H1 (cell line): ENCODE measurements at regions of chr4 and their contacts with region 1.

Region 1: GRCh38 chr4:7987148-7987989 is 47.7 kb upstream of the AFAP1 start:
- DNase-seq: peak in 1 of 2 experiments; percentile 95
- H3K4me3 ChIP-seq: no peak overlapping the region
- H3K27ac ChIP-seq: no peak overlapping the region
- H3K4me1 ChIP-seq: peaks cover 0 to 6% (median 2%) of the 10 kb centered on the region in 4 experiments; a peak in 1 of 7 replicates
- H3K27me3 ChIP-seq: no peaks in the 10 kb centered on the region
- CTCF ChIP-seq: peak in 2 of 3 experiments; percentile 93 to 98; a peak in 3 of 4 replicates
- EP300 ChIP-seq: no peak
- POLR2A ChIP-seq: no peak
- RAD21 ChIP-seq: peak; percentile 99

Region 2: DNA sequence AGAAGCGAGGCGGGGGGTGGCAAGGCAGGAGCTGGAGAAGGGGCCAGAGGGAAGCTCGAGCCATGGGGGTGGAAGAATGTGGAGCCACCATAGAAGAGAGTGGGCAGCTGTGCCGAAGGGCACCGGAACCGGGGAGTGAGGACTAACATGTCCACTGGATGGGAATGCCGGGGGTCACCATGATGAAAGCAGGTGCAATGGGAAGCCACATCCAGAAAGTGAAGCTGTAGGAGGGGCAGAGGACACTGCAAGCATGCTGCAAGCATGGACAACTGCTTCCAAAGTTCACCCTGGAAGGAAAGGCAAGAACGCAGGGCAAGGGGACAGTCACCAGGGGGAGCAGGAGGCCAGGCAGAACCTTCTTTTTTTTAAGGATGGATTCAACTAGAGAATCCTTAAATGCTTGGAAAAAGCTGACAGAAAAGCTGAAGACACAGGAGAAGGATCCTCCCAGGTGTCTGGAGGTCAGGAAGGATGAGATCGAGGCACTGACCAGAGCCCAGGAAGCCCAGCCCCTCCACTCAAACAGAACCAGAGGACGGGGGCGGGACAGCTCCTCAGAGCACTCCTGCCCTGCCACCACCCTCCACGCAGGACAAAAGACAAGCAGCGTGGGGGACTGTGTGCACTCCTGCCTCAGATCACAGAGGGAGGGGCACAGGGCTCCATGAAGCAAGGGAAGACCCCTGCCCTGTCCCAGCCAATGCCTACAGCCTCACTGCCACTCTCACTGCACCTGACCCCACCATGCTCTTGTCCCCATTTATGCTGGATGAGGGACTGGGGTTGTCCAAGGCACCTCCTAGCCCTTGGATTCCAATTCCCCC is 216.9 kb before region 1 on chr4:
- CTCF ChIA-PET with region 1: interaction called, 32 read pairs
- POLR2A ChIA-PET with region 1: no interaction called
- DNase-seq: peak in 1 of 2 experiments; percentile 60
- H3K4me3 ChIP-seq: no peak overlapping the region
- H3K27ac ChIP-seq: no peak overlapping the region
- H3K4me1 ChIP-seq: peaks cover 0 to 5% (median 1%) of the 10 kb centered on the region in 4 experiments; a peak in 4 of 7 replicates
- H3K27me3 ChIP-seq: no peaks in the 10 kb centered on the region
- CTCF ChIP-seq: peak in 2 of 3 experiments; percentile 71 to 81; a peak in 3 of 4 replicates
- EP300 ChIP-seq: no peak
- POLR2A ChIP-seq: no peak
- RAD21 ChIP-seq: peak; percentile 62 to 65

Region 3: DNA sequence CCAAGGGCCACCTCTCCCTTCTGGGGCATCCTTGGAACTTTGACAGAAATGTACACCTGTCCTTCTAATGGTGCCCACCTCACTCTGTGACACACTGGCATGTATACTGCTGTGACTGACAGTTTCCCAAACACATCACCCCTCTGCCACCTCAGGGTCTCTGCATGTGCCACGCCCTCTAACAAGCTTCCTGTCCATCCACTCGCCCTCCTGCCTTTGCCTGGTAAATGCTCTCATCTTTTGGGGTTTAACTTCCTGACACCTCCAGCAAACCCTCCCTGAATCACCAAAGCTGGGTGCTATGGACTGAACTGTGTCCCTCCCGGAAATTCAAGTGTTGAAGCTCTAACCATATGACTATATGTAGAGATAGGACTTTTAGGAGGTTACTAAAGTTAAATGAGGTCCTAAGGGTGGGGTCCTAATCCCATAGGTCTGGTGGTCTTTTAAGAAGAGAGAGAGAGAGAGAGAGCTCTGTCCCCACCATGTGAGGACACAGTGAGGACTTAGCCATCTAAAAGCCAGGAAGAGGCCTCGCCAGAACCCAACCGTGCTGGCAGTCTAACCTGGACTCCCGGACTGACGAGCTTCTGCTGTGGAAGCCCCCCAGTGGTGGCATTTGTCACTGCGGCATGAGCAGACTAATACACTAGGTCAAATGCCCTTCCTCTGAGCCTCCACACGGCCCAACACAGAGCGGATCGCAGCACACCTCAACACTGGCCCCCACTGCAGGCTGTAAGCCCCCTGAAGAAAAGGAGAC is 143.4 kb before region 1 on chr4:
- CTCF ChIA-PET with region 1: interaction called, 35 read pairs
- POLR2A ChIA-PET with region 1: no interaction called
- DNase-seq: peak; percentile 63 to 90
- H3K4me3 ChIP-seq: no peak overlapping the region
- H3K27ac ChIP-seq: no peak overlapping the region
- H3K4me1 ChIP-seq: peaks cover 0 to 3% (median 3%) of the 10 kb centered on the region in 4 experiments; a peak in 4 of 7 replicates
- H3K27me3 ChIP-seq: no peaks in the 10 kb centered on the region
- CTCF ChIP-seq: peak; percentile 80 to 85 (median 84)
- EP300 ChIP-seq: no peak
- POLR2A ChIP-seq: no peak
- RAD21 ChIP-seq: peak; percentile 53 to 71

Region 4: DNA sequence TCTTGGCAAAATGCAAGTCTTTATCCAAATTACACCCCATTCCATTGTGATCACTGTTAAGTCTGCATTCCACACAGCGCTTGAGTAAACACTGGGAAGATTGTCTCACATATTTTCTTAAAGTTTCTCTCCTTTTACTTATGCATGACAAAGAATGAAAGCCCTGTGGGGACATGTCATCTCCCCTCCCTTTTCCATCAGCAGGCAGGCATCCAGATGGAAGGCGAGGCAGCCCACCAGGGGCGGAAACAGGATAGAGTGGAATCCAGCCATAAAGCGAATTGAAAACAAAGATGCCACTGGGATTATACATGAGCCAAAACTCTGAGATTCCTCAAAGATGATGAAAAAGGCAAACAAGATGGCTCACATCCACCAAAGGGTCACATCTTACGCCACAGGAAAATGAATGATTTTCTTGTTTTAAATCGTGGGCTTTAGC is 125.9 kb before region 1 on chr4:
- CTCF ChIA-PET with region 1: no interaction called
- POLR2A ChIA-PET with region 1: no interaction called
- DNase-seq: peak in 1 of 2 experiments; percentile 61
- H3K4me3 ChIP-seq: peak overlapping the region in 1 of 4 experiments; percentile 17; a peak in 1 of 8 replicates
- H3K27ac ChIP-seq: peak overlapping the region; percentile 69
- H3K4me1 ChIP-seq: peaks cover 5 to 15% (median 9%) of the 10 kb centered on the region in 4 experiments
- H3K27me3 ChIP-seq: no peaks in the 10 kb centered on the region
- CTCF ChIP-seq: no peak
- EP300 ChIP-seq: peak in 1 of 2 experiments; percentile 57; a peak in 1 of 3 replicates
- POLR2A ChIP-seq: no peak
- RAD21 ChIP-seq: no peak

Region 5: DNA sequence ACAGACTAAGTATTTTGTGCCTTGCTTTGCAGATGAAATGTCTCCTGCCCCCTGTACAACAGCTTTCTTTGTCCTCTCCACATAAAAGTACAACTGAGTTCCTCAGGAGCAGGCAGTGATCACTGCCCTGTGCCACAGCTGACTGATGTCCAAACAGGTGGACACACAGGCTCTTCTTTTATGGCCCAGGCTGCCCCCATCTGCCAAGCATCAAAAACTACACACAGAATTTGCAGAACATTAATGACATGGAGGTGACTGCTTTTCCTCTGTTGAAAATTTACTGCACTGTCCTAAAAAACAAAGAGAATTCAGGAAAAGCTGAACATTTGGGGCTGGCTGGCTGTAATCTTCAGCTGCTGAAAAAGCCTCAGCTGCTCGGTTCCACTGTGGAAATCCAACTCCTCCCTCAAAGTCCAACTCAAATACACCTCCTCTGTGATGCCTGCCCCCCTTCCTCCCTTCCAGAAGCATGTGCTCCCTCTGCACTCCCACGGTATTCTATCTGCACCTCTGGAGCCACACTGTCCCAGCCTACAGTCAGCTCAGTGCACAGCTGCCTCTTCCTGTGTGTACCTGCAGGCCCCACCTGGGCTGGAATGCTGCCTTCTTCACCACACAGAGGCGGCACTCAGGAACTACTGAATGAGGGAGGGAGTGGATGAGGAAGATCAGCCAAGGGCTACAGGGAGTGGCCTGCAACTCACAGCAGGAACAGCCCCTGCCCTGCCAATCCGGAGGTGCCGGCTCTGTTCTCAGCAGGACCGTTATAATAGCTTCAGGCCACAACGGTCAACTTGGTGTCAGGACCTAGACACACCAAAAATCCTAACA is 58.0 kb before region 1 on chr4:
- CTCF ChIA-PET with region 1: interaction called, 15 read pairs
- POLR2A ChIA-PET with region 1: no interaction called
- DNase-seq: peak in 1 of 2 experiments; percentile 25
- H3K4me3 ChIP-seq: no peak overlapping the region
- H3K27ac ChIP-seq: no peak overlapping the region
- H3K4me1 ChIP-seq: peaks cover 6 to 12% (median 10%) of the 10 kb centered on the region in 4 experiments; a peak in 6 of 7 replicates
- H3K27me3 ChIP-seq: no peaks in the 10 kb centered on the region
- CTCF ChIP-seq: peak in 2 of 3 experiments; percentile 30 to 39; a peak in 2 of 4 replicates
- EP300 ChIP-seq: peak in 1 of 2 experiments; percentile 36; a peak in 1 of 3 replicates
- POLR2A ChIP-seq: no peak
- RAD21 ChIP-seq: peak; percentile 53 to 65

Region 6: DNA sequence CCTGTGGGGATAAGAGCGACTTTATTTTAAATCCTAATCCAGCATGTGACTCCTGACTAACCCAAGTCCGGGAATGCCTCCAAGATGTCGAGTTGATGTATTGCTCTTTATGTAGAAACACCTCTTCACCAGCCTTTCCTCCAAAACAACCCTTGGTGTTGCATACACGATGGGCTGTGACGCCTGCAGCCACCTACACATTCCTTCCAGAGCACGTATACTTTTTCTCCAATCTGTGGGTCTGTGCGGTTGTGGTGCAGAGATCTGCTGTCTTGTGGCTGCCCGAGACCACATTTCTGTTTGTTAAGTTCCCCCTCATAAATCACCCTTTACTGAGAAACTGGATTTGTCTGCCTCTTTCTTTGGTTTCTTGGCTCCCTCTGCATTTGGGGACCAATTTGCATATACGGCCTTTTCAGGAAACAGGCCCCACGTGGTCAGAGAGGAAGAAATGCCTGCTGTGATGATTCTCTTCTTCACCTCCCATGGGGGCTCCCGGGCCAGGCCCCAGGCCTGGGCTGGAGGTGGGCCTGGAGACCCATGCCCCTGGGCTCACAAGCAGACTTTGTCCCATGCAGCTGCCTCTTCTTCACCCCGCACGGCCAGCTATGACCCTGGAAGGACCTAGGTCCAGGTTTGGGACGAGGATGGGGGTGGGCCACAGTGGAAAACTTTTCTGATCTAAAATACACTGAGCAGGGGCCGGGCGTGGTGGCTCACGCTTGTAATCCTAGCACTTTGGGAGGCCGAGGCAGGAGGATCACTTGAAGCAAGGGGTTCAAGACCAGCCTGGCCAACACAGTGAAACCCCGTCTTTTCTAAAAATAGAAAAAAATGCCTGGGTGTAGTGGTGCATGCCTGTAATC is 26.3 kb before region 1 on chr4:
- CTCF ChIA-PET with region 1: interaction called, 28 read pairs
- POLR2A ChIA-PET with region 1: interaction called, 4 read pairs
- DNase-seq: no peak
- H3K4me3 ChIP-seq: no peak overlapping the region
- H3K27ac ChIP-seq: no peak overlapping the region
- H3K4me1 ChIP-seq: peaks cover 3 to 12% (median 7%) of the 10 kb centered on the region in 4 experiments
- H3K27me3 ChIP-seq: no peaks in the 10 kb centered on the region
- CTCF ChIP-seq: no peak
- EP300 ChIP-seq: no peak
- POLR2A ChIP-seq: no peak
- RAD21 ChIP-seq: no peak

Region 7: GRCh38 chr4:8039290-8039689 is 51.9 kb after region 1 on chr4:
- CTCF ChIA-PET with region 1: no interaction called
- POLR2A ChIA-PET with region 1: no interaction called
- DNase-seq: no peak
- H3K4me3 ChIP-seq: no peak overlapping the region
- H3K27ac ChIP-seq: no peak overlapping the region
- H3K4me1 ChIP-seq: peaks cover 0 to 7% (median 1%) of the 10 kb centered on the region in 4 experiments; a peak in 2 of 7 replicates
- H3K27me3 ChIP-seq: no peaks in the 10 kb centered on the region
- CTCF ChIP-seq: no peak
- EP300 ChIP-seq: no peak
- POLR2A ChIP-seq: no peak
- RAD21 ChIP-seq: no peak

Region 8: GRCh38 chr4:8058031-8058479 is 70.7 kb after region 1 on chr4:
- CTCF ChIA-PET with region 1: no interaction called
- POLR2A ChIA-PET with region 1: no interaction called
- DNase-seq: no peak
- H3K4me3 ChIP-seq: no peak overlapping the region
- H3K27ac ChIP-seq: no peak overlapping the region
- H3K4me1 ChIP-seq: no peaks in the 10 kb centered on the region; a peak in 1 of 7 replicates
- H3K27me3 ChIP-seq: no peaks in the 10 kb centered on the region
- CTCF ChIP-seq: no peak
- EP300 ChIP-seq: no peak
- POLR2A ChIP-seq: no peak
- RAD21 ChIP-seq: no peak